MCF 10A (cell line): ENCODE measurements at regions of chr17 and their contacts with region 1.

Region 1: GRCh38 chr17:44331249-44331760 is 6.7 kb upstream of the SLC25A39 start:
- DNase-seq: peak; percentile 80
- H3K4me3 Mint-ChIP-seq: peak overlapping the region; percentile 12
- H3K27ac Mint-ChIP-seq: no peak overlapping the region
- H3K4me1 Mint-ChIP-seq: peaks cover 6% of the 10 kb centered on the region
- H3K27me3 Mint-ChIP-seq: no peaks in the 10 kb centered on the region
- CTCF ChIP-seq: peak; percentile 74

Region 2: DNA sequence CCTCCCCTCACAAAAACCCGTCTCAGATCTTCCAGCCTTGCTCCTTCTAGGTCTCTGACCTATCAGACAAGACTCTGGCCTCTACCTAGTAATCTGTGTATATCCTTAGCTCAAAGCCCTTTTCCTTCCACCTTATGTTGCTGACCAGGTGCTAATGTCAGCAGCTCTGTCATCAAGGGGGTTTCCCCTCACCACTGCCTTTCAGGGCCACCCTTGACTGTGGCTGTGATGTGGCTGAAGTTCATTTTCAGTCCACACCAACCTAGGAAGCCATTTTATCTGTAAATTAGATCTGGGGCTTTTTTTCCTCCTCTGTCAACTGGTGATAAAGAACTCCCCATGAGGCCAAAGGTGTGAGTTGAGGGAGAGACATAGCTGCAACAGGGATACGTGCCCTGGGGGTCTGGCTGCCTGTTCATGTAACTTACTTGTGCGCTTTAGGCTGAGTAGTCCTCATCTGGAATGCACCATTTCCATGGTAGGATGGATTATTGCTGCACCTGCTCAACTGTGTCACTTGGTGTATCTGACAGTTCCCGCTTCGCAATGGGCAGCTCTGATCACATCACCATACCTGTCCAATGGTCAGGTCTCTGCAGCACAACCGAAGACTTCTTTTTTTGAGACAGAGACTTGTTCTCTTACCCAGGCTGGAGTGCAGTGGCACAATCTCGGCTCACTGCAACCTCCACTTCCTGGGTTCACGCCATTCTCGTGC is 37.6 kb before region 1 on chr17:
- CTCF ChIA-PET with region 1: no interaction called
- POLR2A ChIA-PET with region 1: no interaction called
- intact Hi-C with region 1: no loop called
- DNase-seq: no peak
- H3K4me3 Mint-ChIP-seq: no peak overlapping the region
- H3K27ac Mint-ChIP-seq: no peak overlapping the region
- H3K4me1 Mint-ChIP-seq: peaks cover 11% of the 10 kb centered on the region
- H3K27me3 Mint-ChIP-seq: peaks cover 13% of the 10 kb centered on the region
- CTCF ChIP-seq: no peak

Region 3: GRCh38 chr17:44314869-44315661 is 16.2 kb before region 1 on chr17:
- CTCF ChIA-PET with region 1: interaction called, 10 read pairs
- POLR2A ChIA-PET with region 1: interaction called, 6 read pairs
- intact Hi-C with region 1: no loop called
- DNase-seq: no peak
- H3K4me3 Mint-ChIP-seq: peak overlapping the region; percentile 64
- H3K27ac Mint-ChIP-seq: no peak overlapping the region
- H3K4me1 Mint-ChIP-seq: peaks cover 9% of the 10 kb centered on the region
- H3K27me3 Mint-ChIP-seq: peaks cover 12% of the 10 kb centered on the region
- CTCF ChIP-seq: no peak

Region 4: DNA sequence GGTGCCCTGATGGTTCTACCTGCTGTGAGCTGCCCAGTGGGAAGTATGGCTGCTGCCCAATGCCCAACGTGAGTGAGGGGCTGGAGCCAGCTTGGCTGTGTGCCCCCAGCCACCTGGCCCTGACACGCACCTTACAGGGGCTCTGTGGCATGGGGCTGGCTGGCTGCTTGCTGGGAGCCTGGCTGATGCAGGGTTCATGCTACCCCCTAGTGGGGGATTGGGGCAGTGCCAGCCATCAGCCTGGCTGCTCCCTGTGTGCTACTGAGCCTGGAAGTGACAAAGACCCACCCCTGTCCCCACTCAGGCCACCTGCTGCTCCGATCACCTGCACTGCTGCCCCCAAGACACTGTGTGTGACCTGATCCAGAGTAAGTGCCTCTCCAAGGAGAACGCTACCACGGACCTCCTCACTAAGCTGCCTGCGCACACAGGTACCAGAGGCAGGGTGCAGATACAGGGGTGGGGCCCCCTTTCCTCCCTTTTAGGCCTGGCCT is 19.5 kb after region 1 on chr17:
- CTCF ChIA-PET with region 1: interaction called, 20 read pairs
- POLR2A ChIA-PET with region 1: interaction called, 38 read pairs
- intact Hi-C with region 1: loop called (anchors 2 kb)
- DNase-seq: peak; percentile 66
- H3K4me3 Mint-ChIP-seq: no peak overlapping the region
- H3K27ac Mint-ChIP-seq: no peak overlapping the region
- H3K4me1 Mint-ChIP-seq: peaks cover 6% of the 10 kb centered on the region
- H3K27me3 Mint-ChIP-seq: no peaks in the 10 kb centered on the region
- CTCF ChIP-seq: peak; percentile 80

Region 5: GRCh38 chr17:44438636-44439035 is 107.3 kb after region 1 on chr17:
- CTCF ChIA-PET with region 1: no interaction called
- POLR2A ChIA-PET with region 1: no interaction called
- intact Hi-C with region 1: no loop called
- DNase-seq: no peak
- H3K4me3 Mint-ChIP-seq: no peak overlapping the region
- H3K27ac Mint-ChIP-seq: peak overlapping the region; percentile 13
- H3K4me1 Mint-ChIP-seq: peaks cover 13% of the 10 kb centered on the region
- H3K27me3 Mint-ChIP-seq: no peaks in the 10 kb centered on the region
- CTCF ChIP-seq: no peak